ENCODE measurements at regions of chr1 and their contacts with region 1.

Region 1: GRCh38 chr1:17890056-17890814 is 135.1 kb downstream of the ACTL8 start:
- DNase-seq: no peak
- ATAC-seq: no peak
- H3K4me3 ChIP-seq: no peak overlapping the region
- H3K27ac ChIP-seq: no peak overlapping the region
- H3K4me1 ChIP-seq: no peaks in the 10 kb centered on the region
- H3K27me3 ChIP-seq: peaks cover 6 to 36% of the 10 kb centered on the region in 2 experiments; a peak in 4 of 5 replicates
- CTCF ChIP-seq: no peak
- EP300 ChIP-seq: no peak
- POLR2A ChIP-seq: no peak
- RAD21 ChIP-seq: no peak

Region 2: DNA sequence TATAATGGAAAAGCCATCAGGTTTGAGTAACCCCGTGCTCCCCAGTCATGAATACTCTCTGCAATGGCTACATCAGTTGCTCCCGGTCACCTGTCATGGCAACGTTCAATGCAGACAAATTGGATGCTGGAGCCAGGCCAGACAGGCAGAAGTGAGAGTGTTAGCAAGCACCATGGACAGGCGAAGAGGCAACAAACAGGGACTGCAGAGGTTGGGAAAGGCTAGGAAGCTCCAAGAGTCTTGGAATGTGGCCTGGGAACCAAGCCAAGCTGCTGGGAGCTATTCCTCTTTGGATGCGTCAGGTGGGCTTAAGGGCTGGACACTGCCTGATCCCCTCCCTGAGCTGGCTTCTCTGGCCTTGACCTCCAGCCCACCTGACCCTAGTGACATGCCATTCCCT is 32.2 kb before region 1 on chr1:
- CTCF ChIA-PET with region 1: no interaction called
- POLR2A ChIA-PET with region 1: no interaction called
- in situ Hi-C with region 1: no loop called
- intact Hi-C with region 1: loop called (anchors 2 kb)
- DNase-seq: no peak
- ATAC-seq: no peak
- H3K4me3 ChIP-seq: no peak overlapping the region
- H3K27ac ChIP-seq: no peak overlapping the region
- H3K4me1 ChIP-seq: peaks cover 35% of the 10 kb centered on the region
- H3K27me3 ChIP-seq: peaks cover 0 to 12% of the 10 kb centered on the region in 2 experiments; a peak in 3 of 5 replicates
- CTCF ChIP-seq: no peak
- EP300 ChIP-seq: no peak
- POLR2A ChIP-seq: no peak
- RAD21 ChIP-seq: no peak

Measured in HepG2 (cell line).